ENCODE measurements at regions of chr10 and their contacts with region 1.

Region 1: GRCh38 chr10:102888048-102888447 is 18.8 kb downstream of the AS3MT start:
- DNase-seq: no peak
- ATAC-seq: no peak
- H3K4me3 ChIP-seq: no peak overlapping the region
- H3K27ac ChIP-seq: no peak overlapping the region
- H3K4me1 ChIP-seq: no peaks in the 10 kb centered on the region
- H3K27me3 ChIP-seq: no peaks in the 10 kb centered on the region
- CTCF ChIP-seq: no peak
- POLR2A ChIP-seq: no peak
- RAD21 ChIP-seq: no peak

Region 2: DNA sequence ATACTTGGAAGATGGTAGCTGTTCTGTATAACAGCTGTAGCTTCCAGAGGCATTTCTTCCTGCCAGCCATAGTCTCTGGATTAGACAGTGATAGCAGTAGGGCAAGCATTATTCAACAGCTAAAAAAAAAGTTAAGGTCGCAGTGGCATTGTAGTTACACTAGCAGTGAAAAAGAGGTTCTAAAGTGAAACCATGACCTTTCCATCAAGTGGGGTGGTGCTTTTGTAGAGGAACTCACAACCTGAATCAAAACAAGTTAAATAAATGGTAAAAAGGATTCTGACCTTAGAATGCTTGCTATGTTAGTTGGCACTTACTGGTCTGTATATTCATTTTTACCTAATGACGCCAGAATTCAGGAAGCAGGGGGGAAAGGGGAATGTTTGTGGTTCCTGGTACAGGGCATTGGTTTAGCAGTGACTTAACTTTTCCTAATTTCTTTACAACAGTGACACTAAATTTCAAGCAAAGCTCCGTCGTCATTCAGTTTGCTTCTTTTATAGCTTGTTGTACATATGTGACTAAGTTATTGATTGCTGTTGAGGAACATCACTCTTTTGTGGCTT is 587.7 kb before region 1 on chr10:
- CTCF ChIA-PET with region 1: no interaction called
- POLR2A ChIA-PET with region 1: no interaction called
- dilution Hi-C with region 1: no loop called
- in situ Hi-C with region 1: no loop called
- intact Hi-C with region 1: no loop called
- DNase-seq: peak; percentile 91
- ATAC-seq: peak; percentile 95
- H3K4me3 ChIP-seq: peak overlapping the region; percentile 8; the same call in 1 of the 2 replicates
- H3K27ac ChIP-seq: no peak overlapping the region
- H3K4me1 ChIP-seq: peaks cover 3% of the 10 kb centered on the region; the same call in 1 of the 2 replicates
- H3K27me3 ChIP-seq: no peaks in the 10 kb centered on the region
- CTCF ChIP-seq: no peak
- POLR2A ChIP-seq: no peak
- RAD21 ChIP-seq: no peak

Region 3: DNA sequence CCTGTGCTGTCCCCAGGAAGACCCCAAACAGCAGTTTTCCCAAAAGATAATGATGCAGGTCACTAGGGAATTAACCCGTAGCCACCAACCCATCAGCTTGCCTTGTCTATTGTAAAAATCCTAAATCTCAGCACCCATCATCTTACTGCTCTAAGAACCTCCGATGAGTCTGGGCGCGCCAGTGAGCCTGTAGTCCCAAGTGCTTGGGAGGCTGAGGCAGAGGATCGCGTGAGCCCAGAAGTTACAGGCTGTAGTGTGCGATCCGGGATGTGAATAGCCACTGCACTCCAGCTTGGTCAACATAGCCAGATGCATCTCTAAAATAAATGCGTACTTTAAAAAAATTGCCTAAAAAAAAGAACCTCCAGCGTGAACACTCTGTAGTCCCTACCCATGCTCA is 17.8 kb before region 1 on chr10:
- CTCF ChIA-PET with region 1: interaction called, 4 read pairs
- POLR2A ChIA-PET with region 1: interaction called, 18 read pairs
- dilution Hi-C with region 1: no loop called
- in situ Hi-C with region 1: no loop called
- intact Hi-C with region 1: no loop called
- DNase-seq: no peak
- ATAC-seq: no peak
- H3K4me3 ChIP-seq: no peak overlapping the region
- H3K27ac ChIP-seq: no peak overlapping the region
- H3K4me1 ChIP-seq: peaks cover 5% of the 10 kb centered on the region
- H3K27me3 ChIP-seq: no peaks in the 10 kb centered on the region
- CTCF ChIP-seq: no peak
- POLR2A ChIP-seq: no peak
- RAD21 ChIP-seq: no peak

Region 4: DNA sequence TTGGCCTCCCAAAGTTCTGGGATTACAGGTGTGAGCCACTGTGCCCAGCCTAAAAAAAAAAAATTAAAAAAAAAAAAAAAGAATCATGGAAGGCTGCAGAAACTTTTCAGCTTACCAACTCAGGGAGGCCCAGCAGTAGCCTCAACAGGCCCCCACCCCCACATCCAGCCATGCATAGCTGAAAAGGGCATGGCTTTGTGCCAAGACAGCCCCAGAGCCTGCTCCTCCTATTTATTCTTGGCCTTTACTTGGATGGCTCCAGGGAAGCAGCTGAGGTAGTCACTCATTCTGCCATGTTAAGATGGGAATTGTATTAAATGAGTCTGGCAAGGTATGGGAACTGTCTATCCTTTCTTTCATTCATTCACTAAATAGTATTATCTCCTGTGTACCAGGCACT is 16.3 kb after region 1 on chr10:
- CTCF ChIA-PET with region 1: interaction called, 5 read pairs
- POLR2A ChIA-PET with region 1: interaction called, 17 read pairs
- dilution Hi-C with region 1: no loop called
- in situ Hi-C with region 1: no loop called
- intact Hi-C with region 1: no loop called
- DNase-seq: no peak
- ATAC-seq: no peak
- H3K4me3 ChIP-seq: no peak overlapping the region
- H3K27ac ChIP-seq: no peak overlapping the region
- H3K4me1 ChIP-seq: no peaks in the 10 kb centered on the region
- H3K27me3 ChIP-seq: no peaks in the 10 kb centered on the region
- CTCF ChIP-seq: no peak
- POLR2A ChIP-seq: no peak
- RAD21 ChIP-seq: no peak